A549 (cell line): ENCODE measurements at regions of chr19 and their contacts with region 1.

Region 1: GRCh38 chr19:7868676-7869452 is 5.3 kb downstream of the PRR36 start:
- DNase-seq: peak; percentile 83 to 91
- ATAC-seq: peak; percentile 40 to 65
- H3K4me3 ChIP-seq: peak overlapping the region; percentile 54
- H3K27ac ChIP-seq: peak overlapping the region; percentile 59 to 82
- H3K4me1 ChIP-seq: peaks cover 28% of the 10 kb centered on the region
- CTCF ChIP-seq: peak; percentile 72
- EP300 ChIP-seq: no peak
- POLR2A ChIP-seq: peak; percentile 35
- RAD21 ChIP-seq: no peak

Region 2: DNA sequence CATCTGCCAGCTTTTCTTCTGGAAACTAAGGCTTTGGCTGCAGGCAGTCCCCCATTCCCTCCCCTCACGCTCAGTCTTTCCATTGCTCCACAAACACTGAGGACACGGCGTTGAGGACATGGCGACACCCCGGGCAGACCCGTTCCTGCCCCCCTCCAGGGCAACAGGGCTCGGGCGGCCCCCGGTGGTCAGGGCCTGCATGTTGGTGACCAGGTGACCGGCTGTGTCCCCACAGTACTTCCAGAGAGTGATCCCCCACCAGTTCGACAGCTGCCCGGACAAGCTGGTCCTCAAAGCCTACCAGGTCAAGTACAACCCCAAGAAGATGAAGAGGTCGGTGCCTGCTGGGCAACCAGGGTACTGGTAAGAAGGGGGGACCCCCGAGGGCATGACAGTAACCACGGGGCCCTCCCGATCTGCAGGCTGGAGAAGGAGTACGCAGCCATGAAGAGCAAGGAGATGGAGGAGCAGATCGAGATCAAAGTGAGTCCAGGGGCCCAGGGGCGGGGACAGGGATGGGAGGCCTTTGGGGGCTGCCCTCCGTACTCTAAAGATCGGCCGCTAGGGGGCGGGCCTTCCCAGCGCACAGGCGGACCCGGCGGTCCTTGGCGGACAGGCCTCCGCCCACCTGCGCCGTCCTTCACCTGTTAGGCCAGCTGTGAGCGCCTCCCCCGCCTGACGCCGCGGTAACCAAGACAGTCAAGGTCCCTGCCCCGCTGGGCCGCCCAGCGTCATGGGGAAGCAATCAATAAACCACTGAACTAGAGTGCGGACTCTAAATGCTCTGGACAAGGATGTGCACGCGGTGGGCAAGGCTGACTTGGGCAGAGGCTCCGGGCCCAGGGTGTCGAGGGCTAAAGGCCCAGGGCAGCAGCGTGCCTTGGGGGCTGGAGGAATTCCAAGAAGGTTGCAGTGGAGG is 15.8 kb before region 1 on chr19:
- CTCF ChIA-PET with region 1: interaction called, 25 read pairs
- POLR2A ChIA-PET with region 1: interaction called, 5 read pairs
- DNase-seq: peak; percentile 75 to 78
- ATAC-seq: peak; percentile 76 to 95
- H3K4me3 ChIP-seq: no peak overlapping the region
- H3K27ac ChIP-seq: no peak overlapping the region
- H3K4me1 ChIP-seq: peaks cover 3% of the 10 kb centered on the region; the same call in 1 of the 3 replicates
- CTCF ChIP-seq: peak; percentile 71
- EP300 ChIP-seq: no peak
- POLR2A ChIP-seq: no peak
- RAD21 ChIP-seq: peak; percentile 70 to 76

Region 3: GRCh38 chr19:7887408-7888144 is 18.7 kb after region 1 on chr19:
- CTCF ChIA-PET with region 1: interaction called, 12 read pairs
- POLR2A ChIA-PET with region 1: interaction called, 7 read pairs
- DNase-seq: no peak
- ATAC-seq: no peak; a peak in 1 of 6 replicates
- H3K4me3 ChIP-seq: peak overlapping the region; percentile 71
- H3K27ac ChIP-seq: peak overlapping the region in 1 of 2 experiments; percentile 93; a peak in 4 of 6 replicates
- H3K4me1 ChIP-seq: no peaks in the 10 kb centered on the region
- CTCF ChIP-seq: no peak
- EP300 ChIP-seq: no peak
- POLR2A ChIP-seq: no peak
- RAD21 ChIP-seq: no peak

Region 4: GRCh38 chr19:7903244-7904073 is 34.6 kb after region 1 on chr19 and contains the start of gene MAP2K7:
- CTCF ChIA-PET with region 1: interaction called, 14 read pairs
- POLR2A ChIA-PET with region 1: interaction called, 10 read pairs
- DNase-seq: peak; percentile 86 to 98
- ATAC-seq: peak; percentile 65 to 83
- H3K4me3 ChIP-seq: peak within 1 kb of the TSS; percentile 72
- H3K27ac ChIP-seq: peak within 1 kb of the TSS; percentile 90 to 97
- H3K4me1 ChIP-seq: peaks cover 8% of the 10 kb centered on the region
- CTCF ChIP-seq: peak; percentile 58
- EP300 ChIP-seq: no peak
- POLR2A ChIP-seq: peak; percentile 98
- RAD21 ChIP-seq: peak; percentile 17 to 39; a peak in 3 of 5 replicates
- polyA plus RNA-seq, gene MAP2K7: 5.5 TPM in 2 replicates

Region 5: GRCh38 chr19:7943444-7944176 is 74.7 kb after region 1 on chr19 and contains the start of gene TIMM44:
- CTCF ChIA-PET with region 1: interaction called, 10 read pairs
- POLR2A ChIA-PET with region 1: interaction called, 4 read pairs
- DNase-seq: peak; percentile 86 to 98
- ATAC-seq: peak; percentile 98 to 99
- H3K4me3 ChIP-seq: peak within 1 kb of the TSS; percentile 92
- H3K27ac ChIP-seq: peak within 1 kb of the TSS; percentile 99 to 100
- H3K4me1 ChIP-seq: peaks cover 8% of the 10 kb centered on the region; the same call in 1 of the 3 replicates
- CTCF ChIP-seq: no peak
- EP300 ChIP-seq: no peak
- POLR2A ChIP-seq: peak; percentile 88
- RAD21 ChIP-seq: no peak
- polyA plus RNA-seq, gene TIMM44: 23.0 and 53.2 TPM in 2 replicates

Region 6: DNA sequence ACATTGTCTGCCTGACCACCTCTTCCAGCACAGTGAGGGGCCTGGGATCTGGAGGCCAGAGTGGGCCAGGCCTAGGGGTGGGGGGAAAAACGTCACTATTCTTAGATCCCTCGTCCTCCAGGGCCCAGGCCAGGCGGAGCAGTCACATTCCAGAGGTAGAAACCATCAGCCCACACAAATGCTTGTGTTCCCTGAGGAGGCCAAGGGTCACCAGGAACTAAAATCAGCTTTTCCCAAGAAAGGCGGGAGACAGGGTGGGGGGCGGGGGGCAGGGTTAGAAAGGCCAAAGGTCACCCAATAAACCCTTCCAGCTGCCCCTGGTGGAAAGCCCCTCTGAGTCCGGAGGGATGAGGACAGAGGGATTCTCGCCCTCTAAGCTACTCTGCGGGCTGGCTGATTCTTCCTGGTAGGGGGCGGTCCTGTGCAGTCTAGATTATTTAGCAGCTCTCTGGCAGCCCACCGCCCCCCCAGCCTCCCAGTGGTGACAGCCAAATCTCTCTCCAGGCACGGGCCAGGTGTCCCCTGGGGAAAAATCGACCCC is 160.2 kb after region 1 on chr19:
- CTCF ChIA-PET with region 1: no interaction called
- POLR2A ChIA-PET with region 1: no interaction called
- DNase-seq: no peak
- ATAC-seq: peak in 1 of 2 experiments; percentile 29; a peak in 1 of 6 replicates
- H3K4me3 ChIP-seq: no peak overlapping the region
- H3K27ac ChIP-seq: no peak overlapping the region
- H3K4me1 ChIP-seq: no peaks in the 10 kb centered on the region
- CTCF ChIP-seq: no peak
- EP300 ChIP-seq: no peak
- POLR2A ChIP-seq: no peak
- RAD21 ChIP-seq: no peak